Endothelial cell of umbilical vein (primary cell): ENCODE measurements at regions of chr10 and their contacts with region 1.

Region 1: GRCh38 chr10:112565434-112566053 is 118.5 kb downstream of the VTI1A start:
- DNase-seq: peak; percentile 87
- H3K4me3 ChIP-seq: no peak overlapping the region
- H3K27ac ChIP-seq: no peak overlapping the region
- H3K4me1 ChIP-seq: no peaks in the 10 kb centered on the region
- H3K27me3 ChIP-seq: no peaks in the 10 kb centered on the region
- CTCF ChIP-seq: peak; percentile 53
- POLR2A ChIP-seq: no peak

Region 2: DNA sequence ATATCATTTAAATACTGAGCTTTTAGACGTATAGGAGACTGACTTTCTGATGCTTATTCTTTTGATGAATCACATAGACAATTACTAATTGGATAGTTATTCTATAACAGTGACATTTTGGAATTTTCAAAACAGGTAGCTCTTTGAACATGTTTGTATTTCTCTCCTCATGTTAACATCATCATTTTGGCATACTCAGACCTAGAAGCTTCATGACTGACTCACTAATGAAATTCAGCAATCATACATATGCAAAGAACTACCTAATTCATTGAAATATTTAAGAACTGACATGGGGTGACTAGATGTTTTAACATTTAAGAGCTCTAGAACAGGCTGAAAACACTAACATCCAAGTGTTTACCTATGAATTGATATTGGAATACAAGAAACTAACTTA is 73.8 kb after region 1 on chr10:
- CTCF ChIA-PET with region 1: no interaction called
- POLR2A ChIA-PET with region 1: no interaction called
- dilution Hi-C with region 1: no loop called
- intact Hi-C with region 1: no loop called
- DNase-seq: no peak
- H3K4me3 ChIP-seq: no peak overlapping the region
- H3K27ac ChIP-seq: no peak overlapping the region
- H3K4me1 ChIP-seq: no peaks in the 10 kb centered on the region
- H3K27me3 ChIP-seq: no peaks in the 10 kb centered on the region
- CTCF ChIP-seq: no peak
- POLR2A ChIP-seq: no peak

Region 3: DNA sequence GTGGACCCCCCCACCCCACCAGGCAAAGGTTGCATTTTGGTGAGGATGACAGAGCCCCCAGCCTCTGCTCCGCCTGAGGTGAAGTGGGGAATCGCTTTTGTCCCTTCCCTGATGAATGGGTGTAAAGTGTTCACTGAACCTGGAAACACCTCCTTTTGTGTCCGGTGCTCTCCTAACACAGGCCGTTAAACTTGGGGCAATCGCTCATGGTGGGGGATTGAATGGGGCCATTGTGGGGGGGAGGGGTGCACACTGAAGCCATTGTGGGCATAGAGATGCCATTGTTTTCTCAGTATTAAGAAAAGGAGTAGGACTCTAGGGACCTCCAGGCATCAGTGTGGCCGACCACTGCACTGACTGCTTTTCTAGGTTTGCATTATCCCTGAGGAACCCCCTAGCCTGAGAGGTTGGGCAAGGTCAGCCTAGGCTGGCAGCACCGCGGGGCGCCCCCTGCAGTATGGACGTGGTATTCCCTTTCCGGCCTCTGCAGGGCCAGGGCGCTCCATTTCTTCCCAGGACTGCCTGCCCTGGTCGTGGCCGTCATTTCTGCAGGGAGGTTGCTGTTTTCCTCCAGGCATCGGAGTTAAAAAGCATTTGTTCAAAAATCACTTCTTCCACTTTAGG is 542.8 kb after region 1 on chr10:
- CTCF ChIA-PET with region 1: no interaction called
- POLR2A ChIA-PET with region 1: no interaction called
- dilution Hi-C with region 1: loop called (anchors 25 kb)
- intact Hi-C with region 1: no loop called
- DNase-seq: no peak
- H3K4me3 ChIP-seq: no peak overlapping the region
- H3K27ac ChIP-seq: no peak overlapping the region
- H3K4me1 ChIP-seq: no peaks in the 10 kb centered on the region
- H3K27me3 ChIP-seq: no peaks in the 10 kb centered on the region
- CTCF ChIP-seq: peak; percentile 49 to 54
- POLR2A ChIP-seq: no peak

Region 4: DNA sequence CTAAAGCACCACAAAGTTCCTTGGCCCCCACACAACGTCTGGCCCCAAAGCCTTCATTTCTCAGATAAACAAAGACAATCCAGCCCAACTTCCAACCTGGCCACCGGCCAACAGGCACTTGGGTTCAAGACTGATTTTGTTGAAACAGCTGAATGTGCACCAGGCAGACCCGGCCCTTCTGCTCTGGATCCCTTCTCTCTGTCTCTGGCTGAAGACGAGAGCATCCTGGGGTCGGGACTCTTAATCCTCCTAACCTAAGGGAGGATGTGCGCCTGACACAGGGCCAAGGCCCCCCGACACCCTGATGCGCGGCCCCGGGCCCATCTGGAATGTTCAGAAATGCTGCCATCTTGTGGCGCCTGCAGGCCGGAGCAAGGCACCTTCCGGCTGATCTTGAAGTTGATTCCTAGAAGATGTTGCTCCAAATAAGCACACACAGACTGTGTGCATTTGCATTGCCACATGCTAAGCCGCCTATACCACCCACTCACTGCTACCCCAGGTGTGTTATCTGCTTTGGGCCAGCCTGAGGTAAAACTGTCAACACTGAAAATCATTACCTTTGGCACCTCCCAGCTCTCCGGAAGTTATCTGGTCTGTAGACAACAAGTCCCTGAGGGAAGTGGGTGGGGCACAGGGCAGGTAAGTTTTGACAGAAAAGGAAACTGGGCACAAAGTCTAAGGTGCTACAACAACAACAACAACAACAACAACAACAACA is 889.0 kb after region 1 on chr10:
- CTCF ChIA-PET with region 1: no interaction called
- POLR2A ChIA-PET with region 1: no interaction called
- dilution Hi-C with region 1: no loop called
- intact Hi-C with region 1: loop called (anchors 1 kb)
- DNase-seq: peak; percentile 36
- H3K4me3 ChIP-seq: no peak overlapping the region
- H3K27ac ChIP-seq: no peak overlapping the region
- H3K4me1 ChIP-seq: no peaks in the 10 kb centered on the region
- H3K27me3 ChIP-seq: peaks cover 2 to 3% of the 10 kb centered on the region in 2 experiments
- CTCF ChIP-seq: peak; percentile 65 to 76
- POLR2A ChIP-seq: no peak

Region 5: GRCh38 chr10:113521123-113521795 is 955.7 kb after region 1 on chr10:
- CTCF ChIA-PET with region 1: no interaction called
- POLR2A ChIA-PET with region 1: no interaction called
- dilution Hi-C with region 1: no loop called
- intact Hi-C with region 1: loop called (anchors 1 kb)
- DNase-seq: peak; percentile 73
- H3K4me3 ChIP-seq: no peak overlapping the region
- H3K27ac ChIP-seq: no peak overlapping the region
- H3K4me1 ChIP-seq: no peaks in the 10 kb centered on the region
- H3K27me3 ChIP-seq: peaks cover 0 to 1% of the 10 kb centered on the region in 2 experiments
- CTCF ChIP-seq: peak; percentile 92 to 95
- POLR2A ChIP-seq: no peak